GM10248 (cell line): ENCODE measurements at regions of chr13 and their contacts with region 1.

Region 1: DNA sequence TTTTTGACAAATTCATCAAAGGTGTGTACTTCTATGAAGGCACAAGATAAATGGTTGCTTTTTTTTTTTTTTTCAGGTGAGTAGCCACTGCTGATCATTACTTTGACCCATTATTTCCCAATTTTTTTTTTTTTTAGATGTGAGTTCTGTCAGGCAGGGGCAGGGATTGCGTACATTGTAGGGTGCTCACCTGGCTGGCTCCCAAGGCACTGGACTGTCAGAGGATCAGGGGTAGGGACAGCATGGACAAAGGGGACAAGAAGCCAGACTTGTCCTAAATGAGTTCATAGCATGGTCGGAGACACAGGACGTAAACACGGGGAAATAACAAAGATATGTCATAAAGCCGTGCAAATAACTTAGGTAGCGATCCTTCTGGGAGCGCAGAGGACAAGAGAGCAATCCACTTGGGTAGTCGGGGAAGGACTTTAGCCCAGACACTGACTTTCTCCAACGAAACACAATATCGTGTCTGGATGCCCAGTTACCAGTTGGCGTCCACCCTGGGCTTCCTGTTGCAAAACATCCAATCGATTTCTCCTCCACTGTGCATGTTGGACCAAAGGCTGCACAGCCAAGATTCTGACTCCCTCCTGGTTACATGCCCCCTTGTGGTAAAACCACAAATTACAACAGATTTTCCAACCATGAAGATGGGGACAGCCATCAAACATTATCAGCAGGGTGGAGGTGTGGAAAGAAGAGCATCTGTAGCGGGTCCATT is 27.5 kb upstream of the KATNAL1 start:
- DNase-seq: peak; percentile 35
- CTCF ChIP-seq: peak; percentile 20

Region 2: DNA sequence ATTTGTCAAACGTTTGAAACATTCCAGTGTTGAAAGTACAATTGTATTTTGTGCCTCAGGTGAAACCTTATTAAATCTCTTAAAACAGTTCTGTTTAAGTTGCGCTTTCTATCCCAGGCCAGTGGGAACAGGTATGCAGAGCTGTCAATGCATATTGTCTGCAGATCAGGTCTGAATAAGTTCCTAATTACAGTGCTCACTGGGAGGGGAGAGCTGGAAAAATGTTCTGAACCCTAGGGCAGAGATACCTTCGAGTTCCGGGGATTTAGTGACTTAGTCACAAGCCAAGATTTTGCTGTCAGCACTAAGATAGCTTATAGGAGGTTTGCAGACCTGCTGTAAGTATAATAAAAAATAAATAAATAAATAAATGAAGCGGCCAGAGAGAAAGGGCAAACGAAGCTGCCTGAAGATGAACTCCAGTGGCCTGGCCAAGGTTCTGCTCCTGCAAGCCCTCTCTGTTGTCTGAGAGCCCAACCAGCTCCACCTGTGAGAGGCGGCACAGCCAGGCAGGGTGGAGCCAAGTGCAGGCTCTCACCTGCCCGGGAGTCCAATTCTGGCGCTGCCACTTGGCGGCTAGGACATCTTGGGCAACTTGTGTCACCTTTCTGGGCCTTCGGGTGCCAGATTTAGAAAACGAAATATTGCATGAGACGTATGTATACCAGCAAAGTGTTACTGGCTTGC is 641.4 kb before region 1 on chr13:
- CTCF ChIA-PET with region 1: no interaction called
- POLR2A ChIA-PET with region 1: no interaction called
- DNase-seq: no peak
- CTCF ChIP-seq: no peak

Region 3: DNA sequence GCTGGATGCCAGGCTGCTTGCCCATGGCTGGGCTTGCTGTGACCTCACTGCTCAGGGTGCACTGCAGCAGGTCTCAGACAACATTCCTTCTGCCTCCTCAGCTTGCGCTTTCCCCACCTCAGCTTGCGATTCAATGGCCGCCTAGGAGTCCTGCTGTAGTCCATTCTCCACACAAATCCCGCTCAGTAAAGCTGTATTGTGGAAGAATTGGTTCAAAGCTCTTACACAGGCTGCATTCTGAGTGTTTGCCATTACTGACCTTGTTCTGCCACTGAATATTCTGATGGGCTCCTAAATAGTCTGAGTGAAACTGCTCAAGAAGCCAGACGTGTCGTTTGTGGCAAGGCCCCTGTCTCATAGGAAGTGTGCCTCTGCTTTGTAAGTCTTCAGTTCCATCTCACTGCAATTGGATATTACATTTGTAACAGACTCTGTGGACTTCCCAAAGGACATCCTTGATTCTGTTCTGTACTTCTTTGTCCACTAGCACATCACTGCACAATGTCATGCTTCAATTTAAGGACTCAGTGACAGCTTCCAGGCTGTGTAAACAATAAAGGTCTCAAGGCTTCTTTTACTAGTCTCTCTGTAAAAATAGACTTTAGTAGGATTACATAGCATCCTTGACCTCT is 77.2 kb before region 1 on chr13:
- CTCF ChIA-PET with region 1: no interaction called
- POLR2A ChIA-PET with region 1: no interaction called
- DNase-seq: peak; percentile 28
- CTCF ChIP-seq: no peak

Region 4: DNA sequence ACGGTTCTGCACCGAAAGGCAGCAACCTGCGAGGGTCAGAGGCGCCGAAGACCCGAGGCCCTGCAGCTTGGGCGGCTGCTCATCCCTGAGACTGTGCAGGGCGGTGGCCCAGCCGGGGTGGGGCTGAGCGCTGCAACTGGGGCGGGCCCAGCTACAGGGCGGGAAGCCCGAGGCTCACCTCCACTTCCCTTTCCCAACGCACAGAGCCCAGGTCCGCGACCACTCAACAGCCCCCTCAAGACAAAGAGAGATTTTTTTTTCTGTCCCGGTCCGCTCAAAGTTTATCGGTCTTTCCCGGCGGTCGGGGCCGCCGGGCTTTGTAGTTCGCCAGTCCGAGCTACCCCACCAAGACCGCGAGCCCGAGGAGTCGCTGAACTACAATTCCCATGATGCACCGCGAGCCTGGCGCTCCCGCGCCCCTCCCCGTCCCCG is 28.0 kb before region 1 on chr13:
- CTCF ChIA-PET with region 1: interaction called, 11 read pairs
- POLR2A ChIA-PET with region 1: no interaction called
- DNase-seq: peak; percentile 92
- CTCF ChIP-seq: no peak

Region 5: GRCh38 chr13:30346153-30346788 is 11.4 kb after region 1 on chr13:
- CTCF ChIA-PET with region 1: interaction called, 11 read pairs
- POLR2A ChIA-PET with region 1: no interaction called
- DNase-seq: peak; percentile 41
- CTCF ChIP-seq: no peak